Posterior vena cava (tissue), 2 donors: ENCODE measurements at regions of chr5 and their contacts with region 1.

Region 1: GRCh38 chr5:139014726-139015125 is 139.6 kb upstream of the LRRTM2 start:
- DNase-seq: no peak

Region 2: DNA sequence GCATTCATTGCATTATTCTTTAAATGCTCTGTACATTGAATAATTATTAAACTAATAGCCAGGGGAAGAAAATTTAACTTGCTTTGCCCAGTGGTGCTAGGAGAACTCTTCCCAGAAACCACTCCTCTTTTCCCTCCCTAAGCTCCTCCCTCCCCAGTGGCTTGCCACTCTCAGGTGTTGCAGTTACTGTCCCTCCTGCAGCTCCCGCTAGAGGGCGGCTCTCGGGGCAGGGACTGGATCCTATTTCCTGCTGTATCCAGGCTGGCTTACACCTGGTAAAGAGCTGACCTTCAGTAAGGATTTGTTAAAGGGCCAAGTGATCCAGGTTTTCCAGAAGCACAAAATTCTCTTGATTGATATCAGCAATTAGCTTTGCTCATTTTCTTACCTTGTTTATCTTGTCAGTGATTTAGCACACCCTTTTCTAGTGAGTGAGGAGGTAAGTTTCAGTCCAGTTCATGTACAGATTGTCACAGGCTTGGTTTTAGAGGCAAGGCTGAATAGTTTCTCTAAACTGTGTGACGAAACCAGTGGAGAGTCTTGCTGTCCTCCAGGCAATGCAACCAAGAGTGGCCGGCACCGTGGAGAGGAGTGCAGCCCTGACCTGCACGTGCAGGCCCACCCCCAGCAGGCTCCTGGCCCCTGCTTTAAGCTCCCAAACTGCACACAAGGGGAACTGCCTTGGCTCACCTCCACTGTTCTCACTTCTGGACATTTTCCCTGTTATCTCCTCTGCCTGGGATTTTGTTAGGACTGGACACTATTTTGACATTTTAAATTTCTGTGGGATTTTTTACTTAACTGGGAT is 1939.4 kb before region 1 on chr5:
- intact Hi-C with region 1: no loop called
- DNase-seq: no peak

Region 3: DNA sequence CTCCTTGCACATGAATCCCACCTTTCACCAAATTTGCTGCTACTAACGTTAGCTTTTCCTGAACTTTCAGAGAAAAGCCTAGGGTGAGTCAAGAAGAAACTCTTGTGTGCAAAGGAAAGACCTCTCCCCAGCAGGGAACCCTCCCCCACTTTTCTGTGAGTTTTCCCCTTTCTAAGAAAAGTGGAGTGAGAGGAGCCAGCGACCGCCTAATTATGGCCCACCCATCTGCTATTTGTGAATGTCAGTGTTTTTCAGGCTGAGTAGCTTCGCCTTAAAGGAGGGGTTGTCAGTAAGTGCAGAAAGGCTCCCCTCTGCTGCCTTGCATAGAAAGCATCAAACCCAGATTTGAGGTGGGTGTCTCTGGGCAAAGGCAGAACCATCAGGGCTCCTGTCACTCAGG is 1468.8 kb before region 1 on chr5:
- intact Hi-C with region 1: no loop called
- DNase-seq: no peak

Region 4: DNA sequence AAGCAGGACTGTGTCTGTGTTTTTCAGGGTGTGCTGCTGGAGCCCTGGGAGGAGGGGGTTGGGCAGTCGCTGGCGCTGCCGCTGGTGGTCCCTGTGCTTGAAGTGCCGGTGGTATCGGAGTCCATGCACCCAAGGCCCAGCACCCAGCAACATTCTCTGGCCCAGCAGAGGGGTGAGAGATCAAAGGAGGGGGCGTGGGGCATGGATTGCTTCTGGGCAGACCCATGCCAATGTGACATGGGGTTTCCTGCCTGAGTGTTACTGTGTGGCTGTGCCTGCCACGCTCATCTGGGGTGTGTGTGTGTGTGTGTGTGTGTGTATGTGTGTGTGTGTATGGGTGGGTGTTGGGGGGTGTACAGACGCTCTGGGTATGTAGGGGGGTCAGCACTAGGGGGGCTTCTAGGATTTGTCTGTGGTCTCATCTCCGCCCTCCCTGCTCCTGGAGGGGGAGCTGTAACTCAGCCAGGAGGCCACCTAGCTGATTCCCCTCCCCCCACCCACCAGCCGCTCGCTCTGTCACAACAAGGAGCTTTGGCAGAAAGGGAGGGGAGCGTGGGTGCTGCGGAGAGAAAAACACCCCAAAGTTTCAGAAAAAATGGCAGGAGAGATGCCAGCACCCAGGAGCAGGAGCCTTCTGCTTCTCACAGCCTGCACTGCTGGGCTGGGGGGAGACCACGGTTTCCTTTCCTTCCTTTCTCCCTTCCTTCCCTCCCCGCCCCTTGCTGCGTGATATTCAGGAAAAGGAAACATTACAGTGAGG is 403.6 kb before region 1 on chr5:
- intact Hi-C with region 1: no loop called
- DNase-seq: peak; percentile 50

Region 5: GRCh38 chr5:139065306-139065705 is 50.6 kb after region 1 on chr5:
- intact Hi-C with region 1: loop called in 1 of 2 experiments (anchors 5 kb)
- DNase-seq: no peak